Dorsolateral prefrontal cortex (tissue), 120 donors: ENCODE measurements at regions of chr21 and their contacts with region 1.

Region 1: GRCh38 chr21:39502631-39503030 is 50.9 kb downstream of the SH3BGR start:
- DNase-seq: peak in 9 of 10 donors; percentile 41 to 77 (median 70)
- H3K4me3 ChIP-seq: peak overlapping the region in 1 of 59 donors; percentile 36
- H3K27ac ChIP-seq: peak overlapping the region in 53 of 59 donors; percentile 11 to 92 (median 69)
- H3K27me3 ChIP-seq: no peaks in the 10 kb centered on the region
- CTCF ChIP-seq: peak in 2 of 56 donors; percentile 14 to 15

Region 2: DNA sequence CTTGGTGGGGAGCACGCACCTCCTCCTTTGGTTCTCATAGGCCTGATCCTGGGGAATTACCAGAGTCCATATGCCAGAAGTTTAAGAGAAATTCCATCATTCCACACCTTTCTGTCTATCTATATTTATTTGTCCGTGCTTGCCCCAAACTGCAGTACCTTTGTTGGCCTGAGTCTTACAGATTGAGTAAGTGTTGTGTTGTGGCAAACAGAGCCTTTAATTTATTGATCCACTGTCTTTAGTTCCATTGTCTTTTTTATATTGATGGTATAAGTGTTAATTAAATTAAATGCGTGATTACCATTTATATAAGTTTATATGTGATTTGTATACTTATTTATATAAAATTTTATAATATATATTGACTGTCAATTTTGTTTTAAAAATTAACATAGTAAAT is 46.0 kb before region 1 on chr21:
- intact Hi-C with region 1: loop called in 1 of 2 experiments (anchors 5 kb)
- DNase-seq: no peak
- H3K4me3 ChIP-seq: peak overlapping the region in 1 of 59 donors; percentile 17
- H3K27ac ChIP-seq: peak overlapping the region in 5 of 59 donors; percentile 20 to 99 (median 89)
- H3K27me3 ChIP-seq: no peaks in the 10 kb centered on the region
- CTCF ChIP-seq: peak in 25 of 56 donors; percentile 7 to 49 (median 21)